ENCODE measurements at regions of chr10 and their contacts with region 1.

Region 1: GRCh38 chr10:106997721-106998120 is 166.8 kb downstream of the SORCS1 start:
- H3K4me3 Mint-ChIP-seq: peak overlapping the region; percentile 32
- H3K27ac Mint-ChIP-seq: peak overlapping the region; percentile 81
- H3K4me1 Mint-ChIP-seq: peaks cover 59% of the 10 kb centered on the region
- H3K27me3 Mint-ChIP-seq: peaks cover 4% of the 10 kb centered on the region

Region 2: DNA sequence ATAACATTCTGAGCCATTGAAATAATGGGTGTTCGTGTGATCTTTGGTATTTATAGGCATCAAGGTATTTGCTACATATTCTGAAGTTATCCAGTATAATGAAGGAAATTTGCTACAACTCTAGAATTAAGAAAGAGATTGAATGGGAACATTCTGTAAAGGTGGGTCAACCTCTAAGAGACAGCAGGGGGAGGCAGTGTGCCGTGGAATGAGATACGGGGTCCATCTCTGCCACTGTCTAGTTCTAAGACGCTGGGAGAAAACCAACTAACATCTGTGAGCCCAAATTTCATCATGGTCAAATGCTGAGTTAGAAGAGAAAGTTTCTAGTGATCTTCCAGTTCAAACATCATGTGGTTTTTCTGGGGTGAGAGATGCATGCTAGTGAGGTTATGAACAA is 202.1 kb before region 1 on chr10:
- intact Hi-C with region 1: loop called (anchors 5 kb)
- H3K4me3 Mint-ChIP-seq: no peak overlapping the region
- H3K27ac Mint-ChIP-seq: no peak overlapping the region
- H3K4me1 Mint-ChIP-seq: peaks cover 9% of the 10 kb centered on the region
- H3K27me3 Mint-ChIP-seq: peaks cover 4% of the 10 kb centered on the region

Region 3: GRCh38 chr10:106836933-106837663 is 160.6 kb before region 1 on chr10:
- intact Hi-C with region 1: loop called (anchors 5 kb)
- H3K4me3 Mint-ChIP-seq: peak overlapping the region; percentile 23
- H3K27ac Mint-ChIP-seq: peak overlapping the region; percentile 87
- H3K4me1 Mint-ChIP-seq: peaks cover 45% of the 10 kb centered on the region
- H3K27me3 Mint-ChIP-seq: no peaks in the 10 kb centered on the region

Region 4: GRCh38 chr10:106935978-106936451 is 61.7 kb before region 1 on chr10:
- intact Hi-C with region 1: loop called (anchors 2 kb)
- H3K4me3 Mint-ChIP-seq: no peak overlapping the region
- H3K27ac Mint-ChIP-seq: peak overlapping the region; percentile 55
- H3K4me1 Mint-ChIP-seq: peaks cover 49% of the 10 kb centered on the region
- H3K27me3 Mint-ChIP-seq: no peaks in the 10 kb centered on the region

Region 5: DNA sequence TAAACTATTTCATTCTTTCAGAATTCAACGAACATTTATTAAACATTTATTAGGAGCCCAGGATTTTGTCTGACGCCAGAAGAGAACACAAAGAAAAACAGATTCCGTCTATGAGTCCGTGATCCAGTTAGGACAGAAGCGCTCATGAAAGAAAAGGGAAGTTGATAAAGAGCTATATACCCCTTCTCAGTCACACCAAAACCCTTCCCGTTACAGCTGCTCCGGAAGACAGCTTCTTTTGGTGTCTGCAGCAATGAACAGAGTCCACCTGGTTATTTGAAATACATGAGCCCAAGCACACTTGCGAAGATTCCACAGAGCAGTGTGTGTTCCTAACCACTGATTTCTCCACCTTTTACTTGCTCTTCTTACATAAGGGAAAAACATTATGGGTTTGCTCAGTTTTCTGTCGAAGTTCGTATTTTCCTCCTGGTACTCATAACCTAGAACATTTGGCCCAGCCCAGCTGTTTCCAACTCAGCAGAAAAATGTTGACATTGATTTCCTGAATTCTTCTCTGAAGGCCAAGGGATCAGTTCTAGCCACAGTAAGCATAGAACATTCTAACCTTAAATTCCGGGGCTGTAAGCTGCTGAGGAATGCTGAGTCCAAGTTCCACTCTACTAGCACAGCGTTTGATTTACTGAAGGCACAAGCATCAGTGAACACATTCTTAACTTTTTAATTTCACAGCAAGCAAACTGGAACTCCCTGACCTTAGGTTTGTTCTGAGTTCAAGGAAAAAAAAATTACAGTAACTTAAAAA is 39.7 kb before region 1 on chr10:
- intact Hi-C with region 1: loop called (anchors 5 kb)
- H3K4me3 Mint-ChIP-seq: peak overlapping the region; percentile 17
- H3K27ac Mint-ChIP-seq: peak overlapping the region; percentile 75
- H3K4me1 Mint-ChIP-seq: peaks cover 45% of the 10 kb centered on the region
- H3K27me3 Mint-ChIP-seq: no peaks in the 10 kb centered on the region

Region 6: GRCh38 chr10:107032700-107033401 is 35.1 kb after region 1 on chr10:
- intact Hi-C with region 1: no loop called
- H3K4me3 Mint-ChIP-seq: no peak overlapping the region
- H3K27ac Mint-ChIP-seq: no peak overlapping the region
- H3K4me1 Mint-ChIP-seq: peaks cover 21% of the 10 kb centered on the region
- H3K27me3 Mint-ChIP-seq: no peaks in the 10 kb centered on the region

Measured in dendritic cell treated with granulocyte-macrophage colony-stimulating factor and Interleukin-4, amounts not matched to agents 40 ng/mL and 50 ng/mL, for 4 days (primary cell).